ENCODE measurements at regions of chr5 and their contacts with region 1.

Region 1: DNA sequence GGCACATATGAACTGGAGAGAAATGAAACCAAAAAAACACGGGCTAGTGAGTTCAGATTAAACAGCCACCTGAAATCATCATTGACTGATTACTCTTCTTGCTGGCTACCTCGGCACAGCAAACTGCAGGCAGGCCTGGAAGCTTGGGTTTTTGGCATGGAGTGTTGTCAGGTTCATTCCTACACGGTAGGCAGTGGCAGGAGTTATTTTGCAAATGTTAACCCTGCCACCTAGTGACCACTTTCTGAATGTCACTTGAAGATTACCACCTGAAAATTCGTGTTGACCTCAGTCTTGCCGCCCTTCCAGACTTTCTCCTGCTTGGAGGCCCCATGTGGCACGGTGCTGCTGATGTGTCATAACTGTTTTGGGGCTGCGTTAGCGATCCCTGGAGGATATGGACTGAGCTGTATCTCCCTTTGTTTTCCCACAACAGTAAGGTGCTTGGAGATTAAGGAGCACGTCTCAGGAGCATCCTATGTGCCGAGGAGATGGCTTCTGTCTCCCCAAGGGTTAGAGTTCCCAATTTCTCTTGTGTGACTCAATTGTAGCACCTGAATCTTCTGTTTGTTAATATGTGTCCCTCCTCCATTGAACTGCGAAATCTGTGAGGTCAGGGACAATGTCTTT is 12.7 kb upstream of the CD180 start:
- ATAC-seq: peak; percentile 61 to 96 (median 85)
- H3K4me3 ChIP-seq: no peak overlapping the region
- H3K27ac ChIP-seq: no peak overlapping the region
- H3K4me1 ChIP-seq: no peaks in the 10 kb centered on the region

Region 2: DNA sequence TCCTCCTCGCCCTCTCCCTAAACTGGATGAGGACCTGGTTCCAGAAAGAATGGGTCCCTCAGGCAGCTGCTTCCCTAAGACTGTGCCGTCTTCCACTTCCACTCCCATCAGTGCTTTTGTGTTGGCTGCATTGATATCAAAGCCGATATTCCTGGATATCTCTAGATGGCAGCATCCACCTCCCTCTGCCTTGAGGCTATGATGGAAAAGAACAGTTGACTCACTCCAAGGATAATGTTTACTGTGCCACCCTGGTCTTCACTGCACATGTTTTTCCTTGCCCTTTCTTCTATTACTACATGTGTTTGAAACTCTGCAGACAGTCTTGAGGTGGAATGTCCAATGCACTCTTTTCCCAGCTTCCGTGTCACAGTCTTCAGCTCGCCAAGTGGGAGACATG is 401.5 kb before region 1 on chr5:
- in situ Hi-C with region 1: loop called in 5 of 9 experiments (anchors 10 to 25 kb)
- ATAC-seq: peak; percentile 61 to 99 (median 94)
- H3K4me3 ChIP-seq: no peak overlapping the region
- H3K27ac ChIP-seq: no peak overlapping the region
- H3K4me1 ChIP-seq: peaks cover 0 to 6% of the 10 kb centered on the region in 2 donors

Region 3: GRCh38 chr5:67156976-67157583 is 52.2 kb before region 1 on chr5:
- in situ Hi-C with region 1: loop called in 1 of 9 experiments (anchors 10 kb)
- ATAC-seq: peak in 1 of 8 experiments; percentile 28
- H3K4me3 ChIP-seq: no peak overlapping the region
- H3K27ac ChIP-seq: no peak overlapping the region
- H3K4me1 ChIP-seq: no peaks in the 10 kb centered on the region